ENCODE measurements at regions of chr6 and their contacts with region 1.

Region 1: DNA sequence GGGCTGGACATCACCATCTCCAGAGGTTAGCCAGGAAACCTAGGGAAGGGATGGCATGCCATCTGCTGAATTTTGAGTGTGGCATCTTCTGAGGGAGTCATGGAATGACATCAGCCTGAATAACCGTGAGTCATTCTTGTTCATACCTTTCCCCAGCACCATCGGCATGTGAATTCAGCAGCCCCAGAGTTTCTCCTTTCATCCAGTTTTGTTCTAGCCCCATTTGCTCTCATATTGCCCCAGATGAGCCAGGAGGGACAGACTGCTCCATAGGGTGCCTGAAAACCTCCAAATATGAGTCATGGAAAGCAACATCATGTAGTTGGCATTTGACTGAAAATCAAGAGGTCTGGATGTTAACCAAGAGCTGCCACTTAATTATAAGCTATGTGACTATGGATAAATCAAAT is 219.2 kb upstream of the SGK1 start:
- DNase-seq: peak; percentile 98
- H3K4me3 Mint-ChIP-seq: no peak overlapping the region
- H3K27ac Mint-ChIP-seq: peak overlapping the region; percentile 65
- H3K4me1 Mint-ChIP-seq: peaks cover 32% of the 10 kb centered on the region
- H3K27me3 Mint-ChIP-seq: no peaks in the 10 kb centered on the region
- CTCF ChIP-seq: no peak

Region 2: GRCh38 chr6:134436281-134436815 is 100.8 kb before region 1 on chr6:
- CTCF ChIA-PET with region 1: no interaction called
- POLR2A ChIA-PET with region 1: interaction called, 4 read pairs
- intact Hi-C with region 1: loop called (anchors 2 kb)
- DNase-seq: peak; percentile 94
- H3K4me3 Mint-ChIP-seq: peak overlapping the region; percentile 43
- H3K27ac Mint-ChIP-seq: peak overlapping the region; percentile 88
- H3K4me1 Mint-ChIP-seq: peaks cover 24% of the 10 kb centered on the region
- H3K27me3 Mint-ChIP-seq: no peaks in the 10 kb centered on the region
- CTCF ChIP-seq: no peak

Region 3: GRCh38 chr6:134517145-134517658 is 19.9 kb before region 1 on chr6:
- CTCF ChIA-PET with region 1: interaction called, 10 read pairs
- POLR2A ChIA-PET with region 1: interaction called, 11 read pairs
- intact Hi-C with region 1: no loop called
- DNase-seq: peak; percentile 95
- H3K4me3 Mint-ChIP-seq: peak overlapping the region; percentile 53
- H3K27ac Mint-ChIP-seq: peak overlapping the region; percentile 73
- H3K4me1 Mint-ChIP-seq: peaks cover 41% of the 10 kb centered on the region
- H3K27me3 Mint-ChIP-seq: no peaks in the 10 kb centered on the region
- CTCF ChIP-seq: no peak

Region 4: DNA sequence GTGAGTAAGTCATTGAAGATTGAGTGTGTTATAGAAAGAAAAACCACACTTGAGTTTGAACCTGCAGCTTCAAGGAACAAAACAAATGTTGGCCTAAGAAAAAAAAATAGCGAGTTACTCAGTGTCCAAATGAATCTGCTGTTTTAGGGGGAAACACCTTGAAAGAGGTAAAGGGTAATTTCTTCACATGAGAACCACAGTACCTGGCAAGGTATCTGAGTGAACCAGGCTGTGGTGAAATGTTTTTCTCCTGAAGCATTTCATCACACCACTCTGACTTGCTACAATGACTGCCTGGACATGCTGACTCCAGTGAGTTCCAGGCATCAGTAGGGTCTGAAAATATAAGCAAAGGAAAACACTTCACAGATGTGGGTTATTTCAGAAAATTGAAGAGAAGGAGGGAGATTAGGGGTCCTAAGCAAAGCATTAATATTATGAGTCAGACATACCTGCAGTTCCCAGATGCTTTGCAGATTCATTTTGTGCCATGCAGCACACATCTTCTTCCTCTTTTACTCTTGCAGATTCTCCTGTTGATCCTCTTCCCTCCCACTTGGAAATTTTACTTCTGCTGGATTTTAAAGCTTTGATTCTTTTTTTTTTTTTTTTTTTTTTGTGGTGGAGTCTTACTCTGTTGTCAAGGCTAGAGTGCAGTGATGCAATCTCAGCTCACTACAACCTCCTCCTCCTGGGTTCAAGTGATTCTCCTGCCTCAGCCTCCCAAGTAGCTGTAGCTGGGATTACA is 13.1 kb before region 1 on chr6:
- CTCF ChIA-PET with region 1: interaction called, 4 read pairs
- POLR2A ChIA-PET with region 1: interaction called, 17 read pairs
- intact Hi-C with region 1: no loop called
- DNase-seq: peak; percentile 88
- H3K4me3 Mint-ChIP-seq: no peak overlapping the region
- H3K27ac Mint-ChIP-seq: peak overlapping the region; percentile 24
- H3K4me1 Mint-ChIP-seq: peaks cover 24% of the 10 kb centered on the region
- H3K27me3 Mint-ChIP-seq: no peaks in the 10 kb centered on the region
- CTCF ChIP-seq: no peak

Region 5: DNA sequence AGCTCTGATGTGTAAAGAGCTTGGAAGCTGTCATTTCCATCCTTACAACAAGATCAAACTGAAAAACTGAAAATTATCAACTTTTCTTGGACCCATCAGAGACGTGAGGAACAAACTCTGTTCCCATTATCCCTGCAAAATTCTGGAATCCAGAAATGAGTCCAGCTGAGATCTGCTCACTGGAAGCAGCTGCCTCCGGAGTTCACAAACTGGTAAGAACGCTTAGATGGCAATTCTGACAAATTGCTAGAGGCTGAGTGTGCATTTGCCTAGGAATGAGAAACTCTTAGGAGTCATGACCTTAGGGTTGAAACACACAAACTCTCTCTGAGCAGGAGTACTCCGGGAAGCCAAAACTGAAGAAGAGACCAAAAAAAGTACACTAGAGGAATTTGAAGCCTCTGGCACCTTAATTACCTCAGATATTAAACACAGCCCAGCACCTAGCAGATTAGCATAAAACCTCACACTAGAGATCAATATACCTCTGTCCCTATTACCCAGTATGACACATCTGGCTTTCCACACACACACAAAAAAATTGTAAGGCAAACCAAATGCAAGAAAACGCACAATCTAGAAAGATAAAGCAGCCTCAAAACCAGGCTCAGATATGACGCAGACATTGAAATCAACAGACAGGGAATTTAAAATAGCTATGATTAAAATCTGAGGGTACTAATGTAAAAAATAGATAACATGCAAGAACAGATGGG is 14.3 kb after region 1 on chr6:
- CTCF ChIA-PET with region 1: interaction called, 5 read pairs
- POLR2A ChIA-PET with region 1: interaction called, 20 read pairs
- intact Hi-C with region 1: no loop called
- DNase-seq: peak; percentile 39
- H3K4me3 Mint-ChIP-seq: peak overlapping the region; percentile 10
- H3K27ac Mint-ChIP-seq: peak overlapping the region; percentile 10
- H3K4me1 Mint-ChIP-seq: peaks cover 16% of the 10 kb centered on the region
- H3K27me3 Mint-ChIP-seq: no peaks in the 10 kb centered on the region
- CTCF ChIP-seq: no peak

Region 6: GRCh38 chr6:134925800-134926199 is 388.6 kb after region 1 on chr6:
- CTCF ChIA-PET with region 1: no interaction called
- POLR2A ChIA-PET with region 1: no interaction called
- intact Hi-C with region 1: no loop called
- DNase-seq: peak; percentile 62
- H3K4me3 Mint-ChIP-seq: no peak overlapping the region
- H3K27ac Mint-ChIP-seq: peak overlapping the region; percentile 8
- H3K4me1 Mint-ChIP-seq: peaks cover 6% of the 10 kb centered on the region
- H3K27me3 Mint-ChIP-seq: no peaks in the 10 kb centered on the region
- CTCF ChIP-seq: no peak

Measured in MCF 10A (cell line).